ENCODE measurements at regions of chr1 and their contacts with region 1.

Region 1: DNA sequence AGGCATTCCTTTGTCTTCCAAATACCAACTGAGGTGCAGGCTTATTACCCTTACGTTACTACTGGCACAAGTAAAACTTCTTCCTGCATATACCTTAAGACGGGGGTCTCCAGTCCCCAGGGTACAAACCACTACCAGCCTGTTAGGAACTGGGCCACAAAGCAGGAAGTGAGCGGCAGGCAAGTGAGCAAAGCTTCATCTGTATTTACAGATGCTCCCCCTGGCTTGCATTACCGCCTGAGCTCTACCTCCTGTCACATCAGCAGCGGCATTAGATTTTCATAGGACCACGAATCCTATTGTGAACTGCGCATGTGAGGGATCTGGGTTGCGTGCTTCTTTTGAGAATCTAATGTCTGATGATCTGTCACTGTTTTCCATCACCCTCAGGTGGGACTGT is 113.1 kb downstream of the SLC45A1 start:
- DNase-seq: peak; percentile 16
- H3K4me3 Mint-ChIP-seq: peak overlapping the region; percentile 20
- H3K27ac Mint-ChIP-seq: peak overlapping the region; percentile 79
- H3K4me1 Mint-ChIP-seq: peaks cover 59% of the 10 kb centered on the region
- H3K27me3 Mint-ChIP-seq: no peaks in the 10 kb centered on the region

Region 2: DNA sequence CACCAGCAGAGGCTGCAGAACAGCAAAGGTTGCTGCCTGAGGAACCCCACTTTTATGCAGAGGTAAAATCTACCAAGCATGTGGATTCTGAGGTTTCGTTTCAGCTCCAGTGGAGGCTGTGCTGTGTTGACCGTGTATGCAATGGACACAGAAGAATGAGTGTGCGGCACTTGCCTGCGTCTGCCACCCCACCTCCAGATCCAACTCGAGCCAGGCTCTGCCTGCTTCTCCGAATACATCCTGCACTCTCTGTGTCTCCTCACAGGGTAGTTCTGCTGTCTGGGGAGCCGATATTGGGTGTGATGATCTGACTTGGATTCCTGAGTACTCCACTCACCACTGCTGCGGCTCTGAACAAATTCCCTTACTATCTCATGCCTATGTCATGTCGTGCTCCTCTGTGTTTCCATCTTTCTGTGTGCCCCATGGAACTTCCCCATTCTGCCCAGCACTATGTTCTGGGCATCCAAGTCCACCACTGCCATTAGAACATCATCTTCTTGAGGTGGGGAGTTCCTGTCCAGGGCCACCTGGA is 16.7 kb after region 1 on chr1:
- intact Hi-C with region 1: loop called (anchors 2 kb)
- DNase-seq: no peak
- H3K4me3 Mint-ChIP-seq: no peak overlapping the region
- H3K27ac Mint-ChIP-seq: peak overlapping the region; percentile 45
- H3K4me1 Mint-ChIP-seq: peaks cover 14% of the 10 kb centered on the region
- H3K27me3 Mint-ChIP-seq: no peaks in the 10 kb centered on the region

Measured in activated T-helper 1 cell treated with anti-CD3 and anti-CD28 coated beads, Interleukin-12 subunit alpha, Interleukin-12 subunit beta, Interleukin-2, Interleukin-4 antibody, amounts not matched to agents 30 ng/mL and 10 ng/mL and 1 ng/mL, durations not matched to agents 14 hours and 24 hours and 36 hours (primary cell).